SK-N-SH (cell line): ENCODE measurements at regions of chr6 and their contacts with region 1.

Region 1: DNA sequence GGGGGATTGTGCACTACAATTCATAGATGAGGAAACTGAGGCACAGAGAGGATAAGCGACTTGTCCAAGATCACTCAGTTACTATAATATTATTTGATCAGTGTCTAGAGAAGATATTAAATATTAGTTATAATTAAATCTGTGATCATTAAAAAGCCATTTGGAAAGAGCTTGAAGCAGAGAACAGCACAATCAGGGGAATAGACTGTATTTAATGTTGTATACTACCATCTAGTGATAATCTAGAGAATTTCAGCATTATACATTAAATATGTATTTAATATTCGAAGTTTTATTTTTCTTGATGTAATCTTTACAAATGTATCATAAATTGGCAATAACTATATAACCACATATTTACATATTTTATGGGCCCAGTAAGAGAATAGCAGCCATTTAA is 20.1 kb upstream of the MTCL3 start:
- DNase-seq: peak; percentile 47
- H3K4me3 ChIP-seq: no peak overlapping the region
- H3K27ac ChIP-seq: no peak overlapping the region
- H3K4me1 ChIP-seq: peaks cover 0 to 4% of the 10 kb centered on the region in 2 experiments; a peak in 1 of 4 replicates
- H3K27me3 ChIP-seq: no peaks in the 10 kb centered on the region
- CTCF ChIP-seq: peak; percentile 70
- EP300 ChIP-seq: no peak
- RAD21 ChIP-seq: peak; percentile 73

Region 2: DNA sequence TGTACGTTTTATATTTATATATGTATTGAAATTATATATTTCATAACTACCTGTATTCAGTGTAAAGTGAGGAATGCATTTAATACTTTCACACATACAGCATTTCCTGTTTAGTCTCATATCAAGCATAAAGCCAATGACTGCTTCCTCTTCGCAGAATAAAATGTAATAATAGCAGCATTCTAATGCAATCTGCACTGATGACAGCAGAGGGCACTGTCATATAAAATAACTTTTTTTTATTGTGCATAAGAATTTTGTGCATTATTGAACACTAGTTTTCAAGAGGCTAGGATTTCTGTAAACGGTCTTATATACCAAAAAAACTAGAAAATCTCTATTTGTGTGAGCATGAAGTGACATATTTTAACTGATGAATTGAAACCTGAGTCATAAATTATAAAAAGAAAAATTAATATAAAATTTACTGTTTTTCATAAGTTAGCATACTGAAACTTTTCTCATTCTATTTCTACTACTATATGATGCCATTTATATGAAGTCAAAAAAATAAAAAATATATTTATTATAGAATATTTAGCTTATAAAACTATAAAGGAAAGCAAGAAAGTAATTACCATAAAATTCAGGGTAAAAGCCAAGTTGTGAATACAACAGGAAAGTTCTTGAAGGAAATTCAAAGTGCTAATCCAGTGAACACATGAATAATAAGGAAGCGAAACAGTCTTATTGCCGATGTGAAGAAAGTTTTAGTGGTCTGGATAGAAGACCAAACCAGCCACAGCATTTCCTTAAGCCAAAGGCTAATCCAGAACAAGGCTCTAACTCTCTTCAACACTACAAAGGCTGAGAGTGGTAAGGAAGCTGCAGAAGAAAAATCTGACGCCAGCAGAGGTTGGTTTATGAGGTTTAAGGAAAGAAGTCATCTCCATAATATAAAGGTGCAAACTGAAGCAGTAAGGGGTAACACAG is 236.3 kb before region 1 on chr6:
- CTCF ChIA-PET with region 1: interaction called, 18 read pairs
- POLR2A ChIA-PET with region 1: no interaction called
- DNase-seq: peak; percentile 31
- H3K4me3 ChIP-seq: no peak overlapping the region; a peak in 1 of 4 replicates
- H3K27ac ChIP-seq: no peak overlapping the region
- H3K4me1 ChIP-seq: peaks cover 6 to 15% of the 10 kb centered on the region in 2 experiments; a peak in 3 of 4 replicates
- H3K27me3 ChIP-seq: no peaks in the 10 kb centered on the region
- CTCF ChIP-seq: peak; percentile 84
- EP300 ChIP-seq: no peak
- RAD21 ChIP-seq: peak; percentile 75

Region 3: GRCh38 chr6:127459231-127459641 is 80.0 kb before region 1 on chr6 and contains the start of gene KIAA0408:
- CTCF ChIA-PET with region 1: interaction called, 67 read pairs
- POLR2A ChIA-PET with region 1: no interaction called
- DNase-seq: no peak
- H3K4me3 ChIP-seq: no peak within 1 kb of the TSS
- H3K27ac ChIP-seq: no peak within 1 kb of the TSS
- H3K4me1 ChIP-seq: peaks cover 0 to 3% of the 10 kb centered on the region in 2 experiments; a peak in 1 of 4 replicates
- H3K27me3 ChIP-seq: no peaks in the 10 kb centered on the region
- CTCF ChIP-seq: no peak
- EP300 ChIP-seq: no peak
- RAD21 ChIP-seq: no peak
- polyA plus RNA-seq, gene KIAA0408: 4.0 and 5.9 TPM in 2 replicates

Region 4: GRCh38 chr6:127464881-127465459 is 74.3 kb before region 1 on chr6:
- CTCF ChIA-PET with region 1: interaction called, 67 read pairs
- POLR2A ChIA-PET with region 1: no interaction called
- DNase-seq: peak; percentile 65
- H3K4me3 ChIP-seq: no peak overlapping the region; a peak in 1 of 4 replicates
- H3K27ac ChIP-seq: peak overlapping the region in 1 of 2 experiments; percentile 34; a peak in 2 of 4 replicates
- H3K4me1 ChIP-seq: peaks cover 0 to 4% of the 10 kb centered on the region in 2 experiments; a peak in 1 of 4 replicates
- H3K27me3 ChIP-seq: no peaks in the 10 kb centered on the region
- CTCF ChIP-seq: peak; percentile 96
- EP300 ChIP-seq: no peak
- RAD21 ChIP-seq: peak; percentile 77